K562 (cell line): ENCODE measurements at regions of chr14 and their contacts with region 1.

Region 1: GRCh38 chr14:75982266-75983018 is 647 bp upstream of the TGFB3 start:
- DNase-seq: peak; percentile 67 to 80 (median 71)
- ATAC-seq: peak; percentile 88
- H3K4me3 ChIP-seq: peak overlapping the region; percentile 72
- H3K27ac ChIP-seq: peak overlapping the region; percentile 55; the same call in 1 of the 3 replicates
- H3K4me1 ChIP-seq: peaks cover 4 to 22% of the 10 kb centered on the region in 2 experiments; a peak in 4 of 5 replicates
- H3K27me3 ChIP-seq: no peaks in the 10 kb centered on the region
- CTCF ChIP-seq: peak; percentile 40 to 73 (median 68); a peak in 5 of 6 replicates
- EP300 ChIP-seq: no peak
- POLR2A ChIP-seq: no peak
- RAD21 ChIP-seq: peak; percentile 52 to 65

Region 2: GRCh38 chr14:75577729-75578101 is 404.7 kb before region 1 on chr14:
- CTCF ChIA-PET with region 1: no interaction called
- POLR2A ChIA-PET with region 1: no interaction called
- in situ Hi-C with region 1: loop called (anchors 10 kb)
- intact Hi-C with region 1: loop called (anchors 5 kb)
- DNase-seq: peak; percentile 65 to 73 (median 68)
- ATAC-seq: peak; percentile 99
- H3K4me3 ChIP-seq: no peak overlapping the region
- H3K27ac ChIP-seq: no peak overlapping the region
- H3K4me1 ChIP-seq: peaks cover 0 to 14% of the 10 kb centered on the region in 2 experiments; a peak in 2 of 5 replicates
- H3K27me3 ChIP-seq: peaks cover 4 to 26% of the 10 kb centered on the region in 2 experiments; a peak in 4 of 5 replicates
- CTCF ChIP-seq: peak; percentile 65 to 69 (median 68)
- EP300 ChIP-seq: no peak
- POLR2A ChIP-seq: no peak
- RAD21 ChIP-seq: peak; percentile 67 to 72

Region 3: GRCh38 chr14:75715926-75716780 is 266.3 kb before region 1 on chr14:
- CTCF ChIA-PET with region 1: interaction called, 13 read pairs
- POLR2A ChIA-PET with region 1: no interaction called
- in situ Hi-C with region 1: loop called (anchors 5 kb)
- intact Hi-C with region 1: loop called (anchors 1 kb)
- DNase-seq: no peak
- ATAC-seq: no peak
- H3K4me3 ChIP-seq: no peak overlapping the region
- H3K27ac ChIP-seq: no peak overlapping the region
- H3K4me1 ChIP-seq: peaks cover 0 to 6% of the 10 kb centered on the region in 2 experiments; a peak in 3 of 5 replicates
- H3K27me3 ChIP-seq: no peaks in the 10 kb centered on the region
- CTCF ChIP-seq: no peak
- EP300 ChIP-seq: no peak
- POLR2A ChIP-seq: no peak
- RAD21 ChIP-seq: no peak

Region 4: GRCh38 chr14:75794615-75795038 is 187.8 kb before region 1 on chr14:
- CTCF ChIA-PET with region 1: interaction called, 4 read pairs
- POLR2A ChIA-PET with region 1: interaction called, 3 read pairs
- in situ Hi-C with region 1: no loop called
- intact Hi-C with region 1: loop called (anchors 1 kb)
- DNase-seq: peak in 1 of 4 experiments; percentile 11
- ATAC-seq: peak; percentile 83
- H3K4me3 ChIP-seq: no peak overlapping the region
- H3K27ac ChIP-seq: no peak overlapping the region
- H3K4me1 ChIP-seq: no peaks in the 10 kb centered on the region
- H3K27me3 ChIP-seq: no peaks in the 10 kb centered on the region
- CTCF ChIP-seq: peak; percentile 29 to 71 (median 68); a peak in 4 of 6 replicates
- EP300 ChIP-seq: no peak
- POLR2A ChIP-seq: no peak
- RAD21 ChIP-seq: peak; percentile 56 to 72

Region 5: DNA sequence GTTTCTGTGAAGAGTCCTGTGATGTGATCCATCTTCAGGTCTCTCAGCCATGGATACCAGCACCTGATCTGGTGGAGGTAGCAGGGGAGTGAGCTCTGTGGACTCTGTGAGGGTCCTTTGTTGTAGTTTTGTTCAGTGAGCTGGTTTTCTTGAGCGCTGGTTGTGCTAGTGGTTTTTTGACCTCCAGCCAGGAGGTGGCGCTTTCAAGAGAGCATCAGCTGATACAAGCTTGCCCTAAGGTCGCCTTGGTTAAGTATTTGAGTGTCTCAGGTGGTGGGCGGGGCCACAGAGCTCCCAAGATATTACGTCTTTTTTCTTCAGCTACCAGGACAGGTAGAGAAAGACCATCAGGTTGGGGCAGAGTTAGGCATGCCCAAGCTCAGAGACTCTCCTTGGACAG is 181.7 kb before region 1 on chr14:
- CTCF ChIA-PET with region 1: no interaction called
- POLR2A ChIA-PET with region 1: no interaction called
- in situ Hi-C with region 1: loop called (anchors 10 kb)
- intact Hi-C with region 1: no loop called
- DNase-seq: peak in 1 of 4 experiments; percentile 3
- ATAC-seq: no peak
- H3K4me3 ChIP-seq: no peak overlapping the region
- H3K27ac ChIP-seq: no peak overlapping the region
- H3K4me1 ChIP-seq: no peaks in the 10 kb centered on the region
- H3K27me3 ChIP-seq: no peaks in the 10 kb centered on the region
- CTCF ChIP-seq: no peak
- EP300 ChIP-seq: no peak
- POLR2A ChIP-seq: no peak
- RAD21 ChIP-seq: no peak

Region 6: DNA sequence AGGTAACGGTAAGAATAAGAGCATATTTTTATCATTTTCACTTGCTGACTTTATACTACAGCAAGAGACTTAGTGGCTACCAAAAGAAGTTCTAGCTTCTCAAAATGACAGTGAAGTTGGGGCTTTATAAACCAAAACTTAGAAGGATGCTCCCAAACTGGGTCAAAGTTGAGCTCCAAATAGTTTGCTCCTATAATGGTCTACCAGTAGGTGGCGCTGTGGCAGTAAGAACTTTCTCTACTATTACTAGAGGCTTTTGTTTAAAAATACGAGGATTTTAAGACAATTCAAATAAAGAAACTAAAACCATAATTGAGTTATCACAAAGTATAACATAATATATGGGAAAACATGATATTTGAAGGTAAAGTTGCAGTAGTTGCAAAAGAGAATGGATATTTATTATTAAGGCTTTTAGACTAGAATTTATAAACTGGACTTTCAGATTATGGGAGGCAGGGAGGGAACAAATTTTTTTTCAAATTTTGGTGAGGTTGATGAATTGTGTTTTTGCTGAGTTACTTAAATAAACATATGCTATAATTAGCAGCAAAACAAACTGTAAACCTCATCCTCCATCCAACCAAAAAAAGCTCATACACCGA is 75.7 kb before region 1 on chr14:
- CTCF ChIA-PET with region 1: interaction called, 6 read pairs
- POLR2A ChIA-PET with region 1: no interaction called
- in situ Hi-C with region 1: loop called (anchors 5 kb)
- intact Hi-C with region 1: loop called (anchors 1 kb)
- DNase-seq: peak; percentile 45 to 73 (median 50)
- ATAC-seq: peak; percentile 70; the same call in 2 of the 3 replicates
- H3K4me3 ChIP-seq: no peak overlapping the region
- H3K27ac ChIP-seq: no peak overlapping the region
- H3K4me1 ChIP-seq: peaks cover 2 to 6% of the 10 kb centered on the region in 2 experiments; a peak in 2 of 5 replicates
- H3K27me3 ChIP-seq: no peaks in the 10 kb centered on the region
- CTCF ChIP-seq: peak; percentile 48 to 69 (median 65); a peak in 5 of 6 replicates
- EP300 ChIP-seq: no peak
- POLR2A ChIP-seq: no peak
- RAD21 ChIP-seq: peak; percentile 58 to 73

Region 7: DNA sequence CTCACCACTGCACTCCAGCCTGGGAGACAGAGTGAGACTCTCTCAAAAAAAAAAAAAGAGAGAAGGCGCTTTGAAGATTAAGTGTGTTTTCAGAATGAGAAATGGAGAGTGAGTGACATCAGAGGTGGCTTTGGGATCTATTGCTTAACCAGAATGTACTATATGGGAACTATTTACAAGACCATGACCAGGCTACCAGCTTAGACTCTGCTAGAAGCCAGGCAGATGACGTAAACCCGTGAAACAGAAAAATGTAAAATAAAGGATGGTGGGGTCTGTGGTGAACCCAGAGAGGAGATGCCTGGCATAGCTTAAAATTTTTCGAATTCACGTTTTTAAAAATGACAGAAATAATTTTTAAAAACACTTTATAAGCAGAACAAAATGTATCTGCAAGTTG is 85.1 kb after region 1 on chr14:
- CTCF ChIA-PET with region 1: no interaction called
- POLR2A ChIA-PET with region 1: no interaction called
- in situ Hi-C with region 1: no loop called
- intact Hi-C with region 1: no loop called
- DNase-seq: no peak
- ATAC-seq: no peak
- H3K4me3 ChIP-seq: no peak overlapping the region
- H3K27ac ChIP-seq: no peak overlapping the region
- H3K4me1 ChIP-seq: no peaks in the 10 kb centered on the region
- H3K27me3 ChIP-seq: no peaks in the 10 kb centered on the region
- CTCF ChIP-seq: no peak
- EP300 ChIP-seq: no peak
- POLR2A ChIP-seq: no peak
- RAD21 ChIP-seq: no peak